ENCODE measurements at regions of chr7 and their contacts with region 1.

Region 1: GRCh38 chr7:39527296-39527695 is 38.9 kb upstream of the YAE1 start:
- DNase-seq: no peak
- H3K4me3 ChIP-seq: no peak overlapping the region
- H3K27ac ChIP-seq: no peak overlapping the region
- H3K4me1 ChIP-seq: no peaks in the 10 kb centered on the region
- H3K27me3 ChIP-seq: peaks cover 0 to 6% of the 10 kb centered on the region in 2 donors
- CTCF ChIP-seq: no peak

Region 2: DNA sequence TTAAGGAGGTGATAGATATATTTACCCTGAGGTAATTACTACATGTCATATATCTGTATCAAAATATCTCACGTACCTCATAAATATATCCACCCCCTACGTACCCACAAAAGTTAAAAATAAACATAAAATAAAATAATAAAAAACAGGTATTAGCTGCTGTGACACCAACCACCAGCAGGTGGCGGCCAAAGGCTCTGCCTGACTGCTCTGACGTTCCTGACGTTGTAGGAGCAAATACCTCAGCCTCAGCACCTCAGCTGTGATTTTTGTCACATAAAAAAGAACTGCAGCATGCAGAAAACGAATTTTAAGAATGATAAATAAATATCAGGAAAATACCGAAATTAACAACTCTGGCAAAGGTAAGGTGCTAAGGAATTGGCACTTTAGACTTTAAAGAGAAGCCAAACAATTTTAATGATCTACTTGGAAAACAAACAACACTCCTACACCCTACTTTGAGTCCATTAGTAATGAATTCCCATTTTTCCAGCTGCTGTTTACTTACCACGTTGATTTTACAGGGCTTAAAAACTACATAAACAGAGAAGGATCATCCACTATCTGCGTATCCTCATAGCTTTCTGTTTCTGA is 1128.5 kb before region 1 on chr7:
- intact Hi-C with region 1: loop called (anchors 10 kb)
- DNase-seq: peak in 1 of 2 donors; percentile 33
- H3K4me3 ChIP-seq: no peak overlapping the region
- H3K27ac ChIP-seq: no peak overlapping the region
- H3K4me1 ChIP-seq: peaks cover 0 to 3% (median 0%) of the 10 kb centered on the region in 4 donors
- H3K27me3 ChIP-seq: no peaks in the 10 kb centered on the region
- CTCF ChIP-seq: peak; percentile 51 to 85

Region 3: DNA sequence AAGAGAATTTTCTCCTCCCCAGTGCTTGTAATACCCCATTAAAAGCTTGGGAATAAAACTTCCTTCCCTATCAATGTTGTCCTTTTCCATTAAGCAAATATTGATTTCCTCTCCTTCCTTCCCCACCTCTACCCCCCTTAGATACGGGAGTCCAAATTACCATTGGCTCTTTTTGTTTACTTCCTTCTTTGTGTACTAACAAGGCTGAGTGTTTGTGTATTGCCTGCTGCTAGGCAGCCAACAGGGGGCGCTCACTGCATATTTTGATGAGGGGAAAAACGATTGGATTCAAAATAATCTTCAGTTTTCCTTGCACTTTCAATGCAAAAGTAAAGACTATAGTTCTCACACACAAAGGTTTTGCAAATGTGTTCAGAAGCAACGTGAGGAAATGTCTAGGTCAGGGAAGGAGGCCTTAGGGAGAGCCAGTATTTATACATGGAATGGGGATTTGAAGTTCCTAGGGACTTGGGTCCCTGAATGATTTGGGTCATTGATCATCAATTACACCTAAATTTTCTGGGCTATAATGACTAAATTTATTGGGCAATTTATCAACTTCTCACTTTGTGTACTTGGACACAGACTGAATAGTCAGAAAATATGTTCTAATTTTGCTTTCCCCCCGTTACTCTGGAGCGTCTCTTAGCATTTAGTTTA is 594.7 kb before region 1 on chr7:
- intact Hi-C with region 1: loop called (anchors 10 kb)
- DNase-seq: peak; percentile 49 to 69
- H3K4me3 ChIP-seq: no peak overlapping the region
- H3K27ac ChIP-seq: no peak overlapping the region
- H3K4me1 ChIP-seq: peaks cover 0 to 7% (median 0%) of the 10 kb centered on the region in 4 donors
- H3K27me3 ChIP-seq: no peaks in the 10 kb centered on the region
- CTCF ChIP-seq: peak; percentile 88 to 89

Region 4: GRCh38 chr7:39547336-39547735 is 20.0 kb after region 1 on chr7:
- intact Hi-C with region 1: no loop called
- DNase-seq: no peak
- H3K4me3 ChIP-seq: no peak overlapping the region
- H3K27ac ChIP-seq: no peak overlapping the region
- H3K4me1 ChIP-seq: no peaks in the 10 kb centered on the region
- H3K27me3 ChIP-seq: no peaks in the 10 kb centered on the region
- CTCF ChIP-seq: no peak

Region 5: DNA sequence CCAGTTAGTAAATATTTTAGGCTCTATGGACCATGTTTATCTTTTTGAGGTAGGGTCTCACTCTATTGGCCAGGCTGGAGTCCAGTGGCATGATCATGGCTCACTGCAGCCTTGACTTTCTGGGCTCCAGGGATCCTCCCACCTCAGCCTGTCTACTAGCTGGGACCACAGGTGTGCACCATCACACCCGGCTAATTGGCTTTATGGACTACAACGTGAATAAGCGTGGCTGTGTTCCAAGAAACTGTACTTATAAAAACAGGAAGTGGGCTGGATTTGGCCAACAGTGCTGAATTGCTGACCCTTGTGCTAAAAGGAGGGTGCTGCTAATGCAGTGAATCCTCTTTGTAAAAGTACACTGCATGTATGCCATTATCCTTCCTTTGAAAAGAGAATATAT is 311.0 kb after region 1 on chr7:
- intact Hi-C with region 1: no loop called
- DNase-seq: no peak
- H3K4me3 ChIP-seq: no peak overlapping the region
- H3K27ac ChIP-seq: no peak overlapping the region
- H3K4me1 ChIP-seq: peaks cover 0 to 6% (median 2%) of the 10 kb centered on the region in 4 donors
- H3K27me3 ChIP-seq: peaks cover 0 to 20% of the 10 kb centered on the region in 2 donors
- CTCF ChIP-seq: no peak